Motor neuron (in vitro differentiated cells): ENCODE measurements at regions of chr20 and their contacts with region 1.

Region 1: DNA sequence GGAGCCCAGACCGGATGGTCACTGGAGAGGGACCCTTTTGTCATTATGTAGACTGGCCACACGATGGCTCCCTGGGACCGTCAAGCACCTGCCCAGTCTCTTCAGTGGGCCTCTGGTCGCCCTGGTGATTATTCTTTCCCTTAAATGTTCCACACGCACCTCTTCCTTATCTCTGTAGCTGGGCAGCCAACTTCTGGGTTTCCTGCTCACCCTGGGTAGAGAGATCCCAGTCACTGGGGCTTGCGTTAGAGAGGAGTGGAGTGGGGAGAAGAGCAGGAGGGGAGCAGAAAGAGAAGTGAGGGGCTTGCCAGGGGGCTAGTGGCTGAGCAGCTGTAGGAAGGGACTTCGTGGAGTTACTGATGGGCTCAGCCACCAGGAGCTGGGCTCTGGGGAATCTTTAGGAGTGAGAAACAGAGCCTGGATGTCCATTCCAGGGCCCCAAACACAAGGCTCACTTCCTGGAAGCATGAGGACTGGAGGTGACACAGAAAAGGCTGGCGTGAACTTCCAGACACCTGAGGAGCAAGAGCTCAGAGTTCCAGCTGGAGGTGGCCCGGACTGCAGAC is 150.1 kb downstream of the DHX35 start:
- ATAC-seq: peak; percentile 91 to 99 (median 96)
- H3K4me3 ChIP-seq: no peak overlapping the region
- H3K27ac ChIP-seq: no peak overlapping the region
- H3K4me1 ChIP-seq: peaks cover 18 to 32% of the 10 kb centered on the region in 2 donors

Region 2: GRCh38 chr20:39264506-39265172 is 152.4 kb after region 1 on chr20:
- in situ Hi-C with region 1: loop called in 1 of 9 experiments (anchors 25 kb)
- ATAC-seq: peak; percentile 64 to 94 (median 78)
- H3K4me3 ChIP-seq: no peak overlapping the region
- H3K27ac ChIP-seq: no peak overlapping the region
- H3K4me1 ChIP-seq: peaks cover 13 to 28% of the 10 kb centered on the region in 2 donors

Region 3: GRCh38 chr20:39429716-39430115 is 317.5 kb after region 1 on chr20:
- in situ Hi-C with region 1: loop called in 1 of 9 experiments (anchors 25 kb)
- ATAC-seq: peak in 5 of 8 experiments; percentile 22 to 74 (median 62)
- H3K4me3 ChIP-seq: no peak overlapping the region
- H3K27ac ChIP-seq: no peak overlapping the region
- H3K4me1 ChIP-seq: peaks cover 11% of the 10 kb centered on the region in 2 donors

Region 4: DNA sequence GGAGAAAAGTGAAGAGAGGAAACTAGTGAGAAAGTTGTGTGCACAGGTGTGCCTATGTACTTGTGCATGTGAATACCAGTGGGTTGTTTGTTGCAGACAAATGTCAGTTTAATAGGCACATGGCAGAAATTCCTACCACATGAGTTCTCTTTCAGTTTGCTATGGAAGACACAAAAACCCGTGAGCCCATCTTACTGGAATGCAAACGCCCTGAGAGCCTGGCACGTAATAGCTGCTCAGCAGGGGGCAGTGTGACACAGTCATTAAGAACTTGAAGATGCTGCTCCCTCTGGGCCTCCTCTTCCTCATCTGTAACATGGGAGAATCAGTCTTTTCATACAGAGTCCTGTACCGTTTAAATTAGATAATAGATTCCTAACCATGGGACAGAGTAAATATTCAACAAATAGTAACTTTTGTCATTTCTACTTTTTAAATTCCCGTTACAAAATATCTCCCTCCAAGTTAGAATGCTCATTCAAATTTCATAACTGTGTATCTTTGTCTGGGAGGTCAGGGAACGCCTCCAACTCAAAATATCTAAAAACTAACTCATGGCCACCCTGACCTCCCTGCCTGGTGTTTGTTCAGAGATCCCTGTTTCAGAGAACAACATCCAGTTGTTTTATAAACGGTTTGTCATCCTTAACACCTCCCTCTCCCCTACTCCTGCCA is 773.9 kb after region 1 on chr20:
- in situ Hi-C with region 1: loop called in 1 of 9 experiments (anchors 25 kb)
- ATAC-seq: peak in 3 of 8 experiments; percentile 86 to 98 (median 93)
- H3K4me3 ChIP-seq: no peak overlapping the region
- H3K27ac ChIP-seq: no peak overlapping the region
- H3K4me1 ChIP-seq: no peaks in the 10 kb centered on the region

Region 5: DNA sequence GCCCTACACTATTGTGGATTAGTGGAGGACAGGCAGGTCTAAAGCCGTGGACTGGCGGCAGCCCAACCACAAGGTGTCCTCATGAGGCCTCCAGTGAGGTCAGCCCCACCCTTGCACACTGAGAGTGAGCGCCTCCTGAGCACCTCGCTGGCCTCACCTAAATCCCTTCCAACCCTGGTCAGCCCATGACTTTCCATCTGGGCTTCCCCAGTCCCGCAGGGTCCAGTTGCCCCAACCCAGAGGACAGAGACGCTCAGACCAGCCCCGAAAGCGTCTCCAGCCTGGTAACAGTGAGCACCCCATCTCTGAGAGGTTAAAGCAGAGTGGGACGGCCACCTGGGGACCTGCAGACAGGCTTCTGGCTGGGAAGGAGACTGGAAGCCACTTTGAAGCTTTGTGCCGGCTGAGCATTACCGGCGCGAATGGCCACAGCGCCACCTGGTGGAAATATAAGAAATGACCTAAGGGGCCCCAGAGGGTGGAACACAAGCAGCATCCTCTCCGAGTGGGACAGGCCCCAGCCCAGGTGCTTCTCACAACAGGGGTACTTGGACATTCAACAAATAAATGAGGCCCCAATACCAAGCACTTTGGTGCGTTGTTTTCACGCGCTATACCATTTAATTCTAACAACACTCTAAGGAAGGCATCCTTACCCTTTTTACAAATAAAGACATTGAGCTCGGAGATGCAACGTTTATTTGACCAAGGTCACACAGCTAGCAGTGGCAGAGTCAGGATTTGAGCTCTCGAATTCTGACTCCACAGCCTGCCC is 1850.7 kb after region 1 on chr20:
- in situ Hi-C with region 1: loop called in 3 of 9 experiments (anchors 25 kb)
- ATAC-seq: peak; percentile 74 to 96 (median 92)
- H3K4me3 ChIP-seq: no peak overlapping the region
- H3K27ac ChIP-seq: no peak overlapping the region
- H3K4me1 ChIP-seq: peaks cover 3 to 5% of the 10 kb centered on the region in 2 donors